Pancreas (tissue), 10 donors: ENCODE measurements at regions of chr2 and their contacts with region 1.

Region 1: GRCh38 chr2:12716282-12717190 is at the start of gene TRIB2:
- DNase-seq: peak; percentile 80 to 94 (median 84)
- ATAC-seq: peak; percentile 64 to 83 (median 76)
- H3K4me3 ChIP-seq: peak within 1 kb of the TSS; percentile 62 to 76 (median 65)
- H3K27ac ChIP-seq: peak within 1 kb of the TSS; percentile 58 to 97 (median 86)
- H3K4me1 ChIP-seq: peaks cover 12 to 20% (median 18%) of the 10 kb centered on the region in 3 donors
- H3K27me3 ChIP-seq: no peaks in the 10 kb centered on the region
- CTCF ChIP-seq: no peak
- total RNA-seq, gene TRIB2: 4.0 to 66.9 (median 8.9) TPM

Region 2: DNA sequence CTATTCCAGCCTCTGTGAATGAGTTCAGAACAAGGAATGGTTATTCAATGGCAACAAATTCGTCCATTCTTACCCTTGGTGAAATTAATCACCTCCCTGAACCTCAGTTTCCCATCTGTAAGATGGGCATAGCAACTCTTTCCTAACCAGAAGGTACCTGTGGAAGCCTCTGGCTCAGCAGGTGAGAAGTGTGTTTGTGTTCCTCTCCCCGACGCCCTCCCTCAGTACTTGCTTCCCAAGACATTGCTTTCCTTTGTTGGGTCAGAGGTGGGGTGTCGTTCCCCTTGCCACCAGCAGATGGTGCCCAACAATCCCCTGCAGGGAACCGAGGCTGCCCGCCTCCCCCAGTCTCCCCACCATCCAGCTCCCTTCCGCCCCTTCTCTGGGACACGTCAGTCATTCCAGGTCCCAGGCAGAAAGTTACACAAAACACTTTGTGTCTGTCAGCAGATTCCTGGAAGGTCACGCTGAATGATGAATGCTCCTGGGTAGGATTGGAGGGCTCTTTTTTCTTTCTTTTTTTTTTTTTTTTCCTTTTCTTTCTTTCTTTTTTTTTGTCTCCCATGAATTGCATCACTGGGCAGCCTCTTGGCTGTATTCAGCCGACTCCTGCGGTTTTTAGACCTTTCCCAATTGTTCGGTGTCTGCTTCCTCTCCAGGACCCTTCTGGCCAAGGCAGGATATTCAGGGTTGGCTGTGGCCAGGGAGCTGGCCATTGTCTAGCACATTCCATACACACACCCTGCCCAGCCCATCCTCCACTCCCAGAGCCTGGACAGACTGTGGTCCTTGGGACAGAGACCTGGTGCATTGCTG is 852.8 kb before region 1 on chr2:
- intact Hi-C with region 1: loop called in 1 of 3 experiments (anchors 10 kb)
- DNase-seq: peak; percentile 61 to 84 (median 78)
- ATAC-seq: peak; percentile 87 to 98 (median 98)
- H3K4me3 ChIP-seq: no peak overlapping the region
- H3K27ac ChIP-seq: no peak overlapping the region
- H3K4me1 ChIP-seq: peaks cover 0 to 3% (median 0%) of the 10 kb centered on the region in 3 donors
- H3K27me3 ChIP-seq: no peaks in the 10 kb centered on the region
- CTCF ChIP-seq: peak; percentile 80 to 92 (median 89)

Region 3: GRCh38 chr2:12456293-12457151 is 260.0 kb before region 1 on chr2:
- intact Hi-C with region 1: loop called in 1 of 3 experiments (anchors 10 kb)
- DNase-seq: peak; percentile 60 to 93 (median 80)
- ATAC-seq: peak; percentile 94 to 97 (median 95)
- H3K4me3 ChIP-seq: peak overlapping the region in 2 of 4 donors; percentile 3 to 16
- H3K27ac ChIP-seq: peak overlapping the region; percentile 27 to 86 (median 62)
- H3K4me1 ChIP-seq: peaks cover 3 to 26% (median 8%) of the 10 kb centered on the region in 3 donors
- H3K27me3 ChIP-seq: no peaks in the 10 kb centered on the region
- CTCF ChIP-seq: no peak